WTC11 (cell line): ENCODE measurements at regions of chr3 and their contacts with region 1.

Region 1: GRCh38 chr3:139319428-139320402 is 24.1 kb upstream of the MRPS22 start:
- DNase-seq: peak; percentile 83
- ATAC-seq: peak; percentile 98
- H3K4me3 Mint-ChIP-seq: no peak overlapping the region
- H3K27ac Mint-ChIP-seq: no peak overlapping the region
- H3K4me1 Mint-ChIP-seq: peaks cover 10% of the 10 kb centered on the region
- H3K27me3 Mint-ChIP-seq: peaks cover 6% of the 10 kb centered on the region
- CTCF ChIP-seq: no peak

Region 2: GRCh38 chr3:138972941-138973340 is 346.8 kb before region 1 on chr3:
- CTCF ChIA-PET with region 1: no interaction called
- POLR2A ChIA-PET with region 1: no interaction called
- DNase-seq: no peak
- ATAC-seq: no peak
- H3K4me3 Mint-ChIP-seq: no peak overlapping the region
- H3K27ac Mint-ChIP-seq: no peak overlapping the region
- H3K4me1 Mint-ChIP-seq: no peaks in the 10 kb centered on the region
- H3K27me3 Mint-ChIP-seq: 0 out of 2 replicates have a peak, but pooled peaks cover 8% of the 10 kb centered on the region
- CTCF ChIP-seq: no peak

Region 3: DNA sequence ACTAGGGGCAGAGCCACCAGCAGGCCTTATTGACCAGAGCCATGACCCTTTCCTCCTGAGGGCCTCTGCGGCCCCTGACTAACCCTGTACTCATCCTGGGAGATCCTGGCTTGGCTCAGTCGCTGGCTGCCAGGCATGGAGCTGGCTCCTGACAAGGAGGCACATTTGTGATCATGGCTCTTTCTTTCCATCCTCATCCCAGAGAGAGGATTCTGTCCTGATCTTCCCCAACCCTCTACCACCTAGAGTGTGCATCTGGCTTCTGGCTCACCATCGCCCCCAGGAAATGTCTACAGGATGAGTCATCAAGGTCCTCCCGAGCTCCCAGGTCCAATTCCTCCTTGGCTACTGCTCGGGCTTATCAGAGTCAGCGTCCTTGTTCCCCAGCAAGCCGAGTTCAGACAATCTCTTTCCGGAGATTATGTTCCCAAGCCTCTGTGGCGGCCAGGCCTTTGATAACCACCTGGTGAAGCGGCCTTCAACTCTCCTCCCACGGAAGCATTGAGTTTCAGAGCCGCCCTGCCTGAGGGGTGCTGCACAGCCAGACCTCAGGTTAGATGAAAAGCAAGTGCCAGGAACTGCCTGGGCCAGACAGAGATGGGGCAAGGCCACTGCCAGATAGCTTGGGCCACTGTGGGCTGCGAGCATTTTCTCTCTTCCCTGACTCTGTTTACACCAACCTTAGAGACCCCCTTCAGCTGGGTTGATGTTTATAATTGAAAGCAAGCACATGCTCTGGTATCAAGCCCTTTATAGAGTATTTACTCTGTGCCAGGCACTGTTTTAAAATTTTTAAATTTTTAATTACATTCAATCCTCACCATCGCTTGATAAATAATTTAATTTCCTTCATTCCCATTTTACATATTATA is 20.2 kb before region 1 on chr3:
- CTCF ChIA-PET with region 1: interaction called, 17 read pairs
- POLR2A ChIA-PET with region 1: no interaction called
- DNase-seq: peak; percentile 14
- ATAC-seq: peak; percentile 70
- H3K4me3 Mint-ChIP-seq: no peak overlapping the region
- H3K27ac Mint-ChIP-seq: no peak overlapping the region
- H3K4me1 Mint-ChIP-seq: peaks cover 9% of the 10 kb centered on the region
- H3K27me3 Mint-ChIP-seq: no peaks in the 10 kb centered on the region
- CTCF ChIP-seq: no peak

Region 4: GRCh38 chr3:139364549-139364948 is 44.8 kb after region 1 on chr3:
- CTCF ChIA-PET with region 1: no interaction called
- POLR2A ChIA-PET with region 1: no interaction called
- DNase-seq: no peak
- ATAC-seq: no peak
- H3K4me3 Mint-ChIP-seq: no peak overlapping the region
- H3K27ac Mint-ChIP-seq: no peak overlapping the region
- H3K4me1 Mint-ChIP-seq: no peaks in the 10 kb centered on the region
- H3K27me3 Mint-ChIP-seq: no peaks in the 10 kb centered on the region
- CTCF ChIP-seq: no peak

Region 5: GRCh38 chr3:139396707-139397106 is 77.0 kb after region 1 on chr3:
- CTCF ChIA-PET with region 1: no interaction called
- POLR2A ChIA-PET with region 1: no interaction called
- DNase-seq: no peak
- ATAC-seq: no peak
- H3K4me3 Mint-ChIP-seq: no peak overlapping the region
- H3K27ac Mint-ChIP-seq: no peak overlapping the region
- H3K4me1 Mint-ChIP-seq: no peaks in the 10 kb centered on the region; the same call in 1 of the 2 replicates
- H3K27me3 Mint-ChIP-seq: no peaks in the 10 kb centered on the region
- CTCF ChIP-seq: no peak

Region 6: GRCh38 chr3:139519998-139520737 is 200.5 kb after region 1 on chr3:
- CTCF ChIA-PET with region 1: no interaction called
- POLR2A ChIA-PET with region 1: no interaction called
- DNase-seq: peak; percentile 73
- ATAC-seq: peak; percentile 78
- H3K4me3 Mint-ChIP-seq: no peak overlapping the region
- H3K27ac Mint-ChIP-seq: no peak overlapping the region
- H3K4me1 Mint-ChIP-seq: peaks cover 26% of the 10 kb centered on the region
- H3K27me3 Mint-ChIP-seq: peaks cover 21% of the 10 kb centered on the region
- CTCF ChIP-seq: peak; percentile 70